ENCODE measurements at regions of chr13 and their contacts with region 1.

Region 1: DNA sequence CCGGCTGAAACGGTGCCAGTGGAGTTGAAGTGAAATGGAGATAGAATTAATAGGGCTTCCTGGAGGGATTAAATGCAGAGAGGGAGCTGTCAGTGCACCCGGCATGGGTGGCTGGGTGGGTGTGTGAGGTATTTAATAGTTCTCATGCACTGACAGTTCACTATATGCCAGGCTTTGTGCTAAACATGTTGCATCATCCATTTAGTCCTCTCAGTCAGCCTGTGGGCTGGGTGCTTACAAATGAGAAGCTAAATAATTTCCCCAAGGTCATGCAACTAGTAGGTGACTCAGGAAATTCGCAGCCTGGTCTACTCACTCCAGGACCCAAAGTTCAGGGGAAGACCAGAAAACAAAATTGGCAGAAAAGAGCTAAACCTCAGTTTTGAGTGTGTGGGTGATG is 63.5 kb upstream of the SPATA13 start:
- DNase-seq: peak; percentile 7
- H3K4me3 Mint-ChIP-seq: peak overlapping the region; percentile 62
- H3K27ac Mint-ChIP-seq: peak overlapping the region; percentile 95
- H3K4me1 Mint-ChIP-seq: peaks cover 21% of the 10 kb centered on the region
- H3K27me3 Mint-ChIP-seq: peaks cover 15% of the 10 kb centered on the region

Region 2: DNA sequence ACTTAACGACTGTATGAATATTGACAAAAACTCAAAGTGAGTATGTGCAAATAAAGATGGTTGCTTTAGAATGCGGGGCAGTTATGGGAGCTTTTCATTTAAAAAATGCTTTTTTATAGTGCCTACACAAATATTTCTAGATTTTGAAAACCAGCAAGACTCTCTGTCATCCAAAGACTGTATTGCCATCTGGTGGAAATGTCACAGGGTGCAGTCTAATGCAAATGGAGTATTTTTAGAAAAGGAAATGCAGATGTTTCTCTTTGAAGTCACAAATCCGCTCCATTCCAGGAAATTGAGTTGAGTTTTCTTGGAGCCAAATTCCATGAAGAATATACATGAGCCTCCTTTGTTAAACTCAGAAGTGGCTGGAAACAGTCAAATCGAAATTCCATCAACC is 197.5 kb before region 1 on chr13:
- intact Hi-C with region 1: no loop called
- DNase-seq: no peak
- H3K4me3 Mint-ChIP-seq: no peak overlapping the region
- H3K27ac Mint-ChIP-seq: no peak overlapping the region
- H3K4me1 Mint-ChIP-seq: peaks cover 10% of the 10 kb centered on the region
- H3K27me3 Mint-ChIP-seq: peaks cover 34% of the 10 kb centered on the region

Region 3: DNA sequence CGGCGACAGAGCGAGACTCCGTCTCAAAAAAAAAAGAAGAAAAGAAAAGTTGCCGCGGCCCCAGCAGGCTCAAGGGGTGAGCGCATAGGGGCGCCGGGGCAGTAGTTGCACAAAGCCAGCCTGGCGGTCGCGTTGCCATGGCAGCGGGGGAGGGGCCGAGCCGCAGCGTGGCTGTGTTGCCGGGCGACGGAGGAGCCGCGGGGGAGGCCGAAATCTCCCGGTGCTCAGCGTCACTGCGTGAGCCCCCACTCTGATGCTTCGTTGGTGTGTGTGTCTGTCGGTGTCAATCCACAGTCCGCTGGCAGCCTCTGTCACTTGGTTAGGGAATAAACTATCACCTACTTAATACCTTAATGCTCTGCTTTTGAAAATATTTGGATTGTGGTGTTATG is 116.9 kb before region 1 on chr13:
- intact Hi-C with region 1: loop called (anchors 1 kb)
- DNase-seq: peak; percentile 89
- H3K4me3 Mint-ChIP-seq: peak overlapping the region; percentile 90
- H3K27ac Mint-ChIP-seq: peak overlapping the region; percentile 79
- H3K4me1 Mint-ChIP-seq: peaks cover 18% of the 10 kb centered on the region
- H3K27me3 Mint-ChIP-seq: peaks cover 53% of the 10 kb centered on the region

Region 4: GRCh38 chr13:24127038-24127643 is 30.1 kb after region 1 on chr13:
- intact Hi-C with region 1: loop called (anchors 1 kb)
- DNase-seq: peak; percentile 5
- H3K4me3 Mint-ChIP-seq: no peak overlapping the region
- H3K27ac Mint-ChIP-seq: peak overlapping the region; percentile 36
- H3K4me1 Mint-ChIP-seq: peaks cover 49% of the 10 kb centered on the region
- H3K27me3 Mint-ChIP-seq: peaks cover 8% of the 10 kb centered on the region

Region 5: GRCh38 chr13:24178847-24179485 is 81.9 kb after region 1 on chr13:
- intact Hi-C with region 1: loop called (anchors 2 kb)
- DNase-seq: no peak
- H3K4me3 Mint-ChIP-seq: no peak overlapping the region
- H3K27ac Mint-ChIP-seq: peak overlapping the region; percentile 75
- H3K4me1 Mint-ChIP-seq: peaks cover 39% of the 10 kb centered on the region
- H3K27me3 Mint-ChIP-seq: no peaks in the 10 kb centered on the region

Region 6: GRCh38 chr13:24228852-24229458 is 131.9 kb after region 1 on chr13:
- intact Hi-C with region 1: loop called (anchors 1 kb)
- DNase-seq: no peak
- H3K4me3 Mint-ChIP-seq: no peak overlapping the region
- H3K27ac Mint-ChIP-seq: peak overlapping the region; percentile 40
- H3K4me1 Mint-ChIP-seq: peaks cover 56% of the 10 kb centered on the region
- H3K27me3 Mint-ChIP-seq: no peaks in the 10 kb centered on the region